Activated T-helper 2 cell treated with anti-CD3 and anti-CD28 coated beads, Interferon-gamma antibody, Interleukin-2, Interleukin-4, amounts not matched to agents 10 μg/mL and 5 μg/mL and 100 μg/mL, durations not matched to agents 14 hours and 24 hours and 36 hours (primary cell): ENCODE measurements at regions of chrX and their contacts with region 1.

Region 1: DNA sequence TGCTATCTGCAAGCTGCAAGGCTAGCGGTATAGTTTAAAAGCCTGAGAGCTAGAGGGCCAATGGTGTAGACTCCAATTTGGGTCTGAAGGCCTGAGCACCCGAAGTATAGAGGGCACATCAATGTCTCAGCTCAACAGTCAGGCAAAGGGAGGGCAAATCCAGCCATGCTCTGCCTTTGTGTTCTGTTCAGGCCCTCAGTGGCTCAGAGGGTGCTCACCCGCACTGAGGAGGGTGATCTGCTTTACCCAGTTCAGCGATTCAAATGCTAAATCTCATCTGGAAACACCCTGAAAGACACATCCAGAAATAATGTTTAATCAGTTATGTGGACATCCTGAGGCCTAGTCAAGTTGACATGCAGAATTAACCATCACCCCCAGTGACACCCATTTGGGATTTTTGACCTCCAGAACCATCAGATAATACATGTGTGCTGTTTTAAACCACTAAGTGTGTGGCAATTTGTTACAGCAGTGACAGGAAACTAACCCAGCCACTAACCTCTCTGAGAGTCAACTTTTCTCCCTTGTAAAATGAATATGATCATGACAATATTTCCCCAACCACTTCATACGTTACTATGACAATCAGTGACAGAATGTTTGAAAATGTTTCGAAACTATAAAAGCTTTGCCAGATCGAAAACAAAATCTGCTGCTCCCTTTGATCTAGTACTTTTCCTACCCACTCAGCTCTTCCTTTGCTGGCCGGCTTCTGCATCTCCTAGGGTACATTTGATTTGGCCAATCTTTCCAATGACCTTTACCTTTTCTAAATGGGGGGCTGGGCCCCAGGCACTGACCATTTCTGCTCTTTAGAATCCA is 8.4 kb upstream of the TBL1X start:
- DNase-seq: peak; percentile 27
- H3K4me3 Mint-ChIP-seq: no peak overlapping the region
- H3K27ac Mint-ChIP-seq: peak overlapping the region; percentile 90
- H3K4me1 Mint-ChIP-seq: peaks cover 28% of the 10 kb centered on the region
- H3K27me3 Mint-ChIP-seq: no peaks in the 10 kb centered on the region

Region 2: GRCh38 chrX:9231491-9231890 is 225.0 kb before region 1 on chrX:
- intact Hi-C with region 1: loop called (anchors 1 kb)
- DNase-seq: no peak
- H3K4me3 Mint-ChIP-seq: no peak overlapping the region
- H3K27ac Mint-ChIP-seq: no peak overlapping the region
- H3K4me1 Mint-ChIP-seq: peaks cover 10% of the 10 kb centered on the region
- H3K27me3 Mint-ChIP-seq: peaks cover 2% of the 10 kb centered on the region

Region 3: DNA sequence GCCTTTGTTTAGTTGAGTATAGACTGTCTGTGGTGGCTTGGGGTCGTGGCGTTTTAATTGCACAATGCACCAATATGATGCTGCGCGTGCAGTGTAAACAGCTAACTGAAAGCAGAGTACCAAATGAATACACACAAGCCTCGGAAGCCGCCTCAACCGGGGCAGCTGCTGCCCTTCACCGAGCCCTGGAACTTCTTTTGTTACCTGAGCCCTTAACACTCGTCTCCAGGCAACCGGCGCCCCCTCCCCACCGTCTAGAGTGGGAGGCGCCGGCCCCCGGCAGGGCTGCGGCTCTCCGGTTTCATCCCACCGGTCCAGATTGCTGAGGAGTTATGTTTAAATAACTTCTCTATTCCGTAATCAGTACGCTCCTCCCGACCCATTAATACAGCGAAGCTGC is 164.8 kb before region 1 on chrX:
- intact Hi-C with region 1: no loop called
- DNase-seq: no peak
- H3K4me3 Mint-ChIP-seq: no peak overlapping the region
- H3K27ac Mint-ChIP-seq: no peak overlapping the region
- H3K4me1 Mint-ChIP-seq: no peaks in the 10 kb centered on the region
- H3K27me3 Mint-ChIP-seq: peaks cover 8% of the 10 kb centered on the region

Region 4: DNA sequence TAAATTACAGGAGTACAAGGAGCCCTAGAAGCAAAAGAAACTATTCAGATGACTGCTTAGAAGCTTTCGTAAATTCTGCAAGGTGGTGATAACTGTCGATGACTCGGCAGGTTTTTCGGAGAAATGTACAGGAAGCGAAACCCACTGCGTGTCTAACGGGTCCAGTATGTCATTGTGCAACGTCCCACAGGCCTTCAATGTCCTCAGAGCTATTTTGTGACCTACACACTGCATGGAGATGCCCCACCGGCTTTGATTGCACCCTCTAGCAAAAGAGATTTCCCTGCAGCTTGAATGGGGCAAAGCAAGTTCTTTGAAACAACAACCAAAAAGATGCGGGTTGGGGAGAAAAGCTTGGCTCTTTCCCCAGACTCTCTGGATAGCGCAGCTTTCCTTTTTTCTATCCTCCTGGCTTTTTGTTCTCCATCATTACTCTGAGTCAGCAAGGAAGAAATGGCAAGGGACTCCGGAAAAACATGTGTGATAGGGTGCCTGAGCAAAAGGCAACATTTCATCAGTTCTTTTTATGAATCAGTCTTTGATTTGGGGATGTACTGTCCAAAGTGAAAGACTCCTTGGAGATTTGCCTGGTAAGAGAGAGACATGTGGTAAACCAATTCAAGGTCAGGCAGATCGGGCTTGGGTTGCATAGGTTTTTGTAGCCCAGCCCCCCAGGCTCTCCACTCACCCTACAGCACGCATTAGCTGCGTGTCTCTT is 103.6 kb before region 1 on chrX:
- intact Hi-C with region 1: loop called (anchors 1 kb)
- DNase-seq: peak; percentile 56
- H3K4me3 Mint-ChIP-seq: peak overlapping the region; percentile 56
- H3K27ac Mint-ChIP-seq: peak overlapping the region; percentile 82
- H3K4me1 Mint-ChIP-seq: peaks cover 39% of the 10 kb centered on the region
- H3K27me3 Mint-ChIP-seq: no peaks in the 10 kb centered on the region

Region 5: GRCh38 chrX:9379697-9380551 is 76.5 kb before region 1 on chrX:
- intact Hi-C with region 1: no loop called
- DNase-seq: no peak
- H3K4me3 Mint-ChIP-seq: no peak overlapping the region
- H3K27ac Mint-ChIP-seq: no peak overlapping the region
- H3K4me1 Mint-ChIP-seq: peaks cover 14% of the 10 kb centered on the region
- H3K27me3 Mint-ChIP-seq: no peaks in the 10 kb centered on the region

Region 6: DNA sequence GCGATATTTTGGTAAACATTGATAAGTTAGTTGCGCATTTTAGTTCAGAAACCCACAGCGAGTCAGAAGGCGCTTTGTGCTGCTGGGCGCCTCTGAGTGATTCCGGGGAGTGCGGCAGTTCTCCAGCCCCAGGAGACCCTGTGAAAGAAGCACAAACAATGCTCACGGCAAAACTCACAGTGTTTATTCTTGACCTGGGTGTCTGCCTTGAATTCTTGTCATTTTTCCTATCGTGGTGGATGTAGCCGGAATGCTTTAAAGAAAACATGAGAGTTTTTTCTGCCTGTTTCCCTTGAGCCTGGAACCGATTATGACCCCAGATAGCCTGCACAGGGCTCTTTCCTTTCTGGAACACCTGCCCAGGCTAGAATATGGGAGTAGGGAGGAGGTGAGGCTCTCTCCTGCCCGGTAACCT is 15.1 kb after region 1 on chrX:
- intact Hi-C with region 1: no loop called
- DNase-seq: no peak
- H3K4me3 Mint-ChIP-seq: no peak overlapping the region
- H3K27ac Mint-ChIP-seq: no peak overlapping the region
- H3K4me1 Mint-ChIP-seq: peaks cover 24% of the 10 kb centered on the region
- H3K27me3 Mint-ChIP-seq: no peaks in the 10 kb centered on the region